T-cell (primary cell): ENCODE measurements at regions of chr2 and their contacts with region 1.

Region 1: GRCh38 chr2:216960671-216961268 is 100.9 kb upstream of the TNP1 start:
- DNase-seq: no peak
- ATAC-seq: no peak
- H3K4me3 ChIP-seq: no peak overlapping the region
- H3K4me3 Mint-ChIP-seq: no peak overlapping the region
- H3K27ac ChIP-seq: no peak overlapping the region
- H3K27ac Mint-ChIP-seq: no peak overlapping the region
- H3K4me1 ChIP-seq: no peaks in the 10 kb centered on the region
- H3K4me1 Mint-ChIP-seq: no peaks in the 10 kb centered on the region
- H3K27me3 ChIP-seq: no peaks in the 10 kb centered on the region
- H3K27me3 Mint-ChIP-seq: peaks cover 0 to 4% of the 10 kb centered on the region in 2 donors

Region 2: GRCh38 chr2:216792222-216793021 is 168.3 kb before region 1 on chr2:
- CTCF ChIA-PET with region 1: no interaction called
- POLR2A ChIA-PET with region 1: interaction called in 1 of 2 experiments, 10 read pairs
- DNase-seq: no peak
- ATAC-seq: no peak
- H3K4me3 ChIP-seq: no peak overlapping the region
- H3K4me3 Mint-ChIP-seq: no peak overlapping the region
- H3K27ac ChIP-seq: no peak overlapping the region
- H3K27ac Mint-ChIP-seq: no peak overlapping the region
- H3K4me1 ChIP-seq: no peaks in the 10 kb centered on the region
- H3K4me1 Mint-ChIP-seq: no peaks in the 10 kb centered on the region
- H3K27me3 ChIP-seq: no peaks in the 10 kb centered on the region
- H3K27me3 Mint-ChIP-seq: peaks cover 0 to 5% of the 10 kb centered on the region in 2 donors